ENCODE measurements at regions of chr12 and their contacts with region 1.

Region 1: GRCh38 chr12:89709157-89709994 is 738 bp upstream of the ATP2B1 start:
- DNase-seq: peak; percentile 97
- H3K4me3 Mint-ChIP-seq: peak overlapping the region; percentile 81
- H3K27ac Mint-ChIP-seq: peak overlapping the region; percentile 91
- H3K4me1 Mint-ChIP-seq: peaks cover 26% of the 10 kb centered on the region
- H3K27me3 Mint-ChIP-seq: peaks cover 31% of the 10 kb centered on the region

Region 2: GRCh38 chr12:89040146-89040964 is 669.0 kb before region 1 on chr12:
- intact Hi-C with region 1: loop called (anchors 5 kb)
- DNase-seq: peak; percentile 79
- H3K4me3 Mint-ChIP-seq: peak overlapping the region; percentile 61
- H3K27ac Mint-ChIP-seq: peak overlapping the region; percentile 95
- H3K4me1 Mint-ChIP-seq: peaks cover 65% of the 10 kb centered on the region
- H3K27me3 Mint-ChIP-seq: no peaks in the 10 kb centered on the region

Region 3: GRCh38 chr12:89524541-89525285 is 184.7 kb before region 1 on chr12 and contains the start of gene GALNT4:
- intact Hi-C with region 1: loop called (anchors 1 kb)
- DNase-seq: peak; percentile 74
- H3K4me3 Mint-ChIP-seq: peak within 1 kb of the TSS; percentile 92
- H3K27ac Mint-ChIP-seq: peak within 1 kb of the TSS; percentile 94
- H3K4me1 Mint-ChIP-seq: peaks cover 45% of the 10 kb centered on the region
- H3K27me3 Mint-ChIP-seq: no peaks in the 10 kb centered on the region
- total RNA-seq, gene GALNT4: 8.7 TPM in 2 replicates

Region 4: GRCh38 chr12:89733579-89734201 is 24.3 kb after region 1 on chr12:
- intact Hi-C with region 1: loop called (anchors 2 kb)
- DNase-seq: no peak
- H3K4me3 Mint-ChIP-seq: no peak overlapping the region
- H3K27ac Mint-ChIP-seq: no peak overlapping the region
- H3K4me1 Mint-ChIP-seq: peaks cover 5% of the 10 kb centered on the region
- H3K27me3 Mint-ChIP-seq: peaks cover 8% of the 10 kb centered on the region

Region 5: GRCh38 chr12:89840162-89840922 is 131.0 kb after region 1 on chr12:
- intact Hi-C with region 1: no loop called
- DNase-seq: no peak
- H3K4me3 Mint-ChIP-seq: no peak overlapping the region
- H3K27ac Mint-ChIP-seq: no peak overlapping the region
- H3K4me1 Mint-ChIP-seq: no peaks in the 10 kb centered on the region
- H3K27me3 Mint-ChIP-seq: peaks cover 2% of the 10 kb centered on the region

Region 6: GRCh38 chr12:89882050-89882449 is 172.7 kb after region 1 on chr12:
- intact Hi-C with region 1: loop called (anchors 1 kb)
- DNase-seq: no peak
- H3K4me3 Mint-ChIP-seq: no peak overlapping the region
- H3K27ac Mint-ChIP-seq: no peak overlapping the region
- H3K4me1 Mint-ChIP-seq: peaks cover 23% of the 10 kb centered on the region
- H3K27me3 Mint-ChIP-seq: peaks cover 2% of the 10 kb centered on the region

Region 7: DNA sequence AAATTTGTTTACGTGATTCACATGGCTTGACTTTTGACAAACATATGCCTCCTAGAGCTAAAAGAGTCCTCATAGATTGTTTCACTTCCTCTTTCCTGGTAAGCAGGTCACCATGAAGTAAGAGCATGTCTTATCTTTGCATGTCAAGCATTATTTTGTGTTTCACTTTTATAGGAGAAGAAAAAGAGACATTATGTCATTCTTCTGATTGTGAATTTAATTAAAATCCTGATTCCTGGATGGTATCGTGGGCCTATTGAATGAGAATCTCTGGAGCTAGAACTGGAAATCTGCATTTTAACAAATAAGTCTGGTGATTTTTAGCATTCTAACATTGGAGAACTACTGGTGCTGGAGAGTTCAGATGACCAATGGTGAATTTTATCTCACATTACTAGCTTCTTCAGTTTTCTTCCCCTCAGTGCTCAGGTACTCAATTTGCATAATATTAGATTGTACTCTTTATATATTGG is 217.9 kb after region 1 on chr12:
- intact Hi-C with region 1: no loop called
- DNase-seq: no peak
- H3K4me3 Mint-ChIP-seq: no peak overlapping the region
- H3K27ac Mint-ChIP-seq: no peak overlapping the region
- H3K4me1 Mint-ChIP-seq: peaks cover 7% of the 10 kb centered on the region
- H3K27me3 Mint-ChIP-seq: no peaks in the 10 kb centered on the region

Region 8: DNA sequence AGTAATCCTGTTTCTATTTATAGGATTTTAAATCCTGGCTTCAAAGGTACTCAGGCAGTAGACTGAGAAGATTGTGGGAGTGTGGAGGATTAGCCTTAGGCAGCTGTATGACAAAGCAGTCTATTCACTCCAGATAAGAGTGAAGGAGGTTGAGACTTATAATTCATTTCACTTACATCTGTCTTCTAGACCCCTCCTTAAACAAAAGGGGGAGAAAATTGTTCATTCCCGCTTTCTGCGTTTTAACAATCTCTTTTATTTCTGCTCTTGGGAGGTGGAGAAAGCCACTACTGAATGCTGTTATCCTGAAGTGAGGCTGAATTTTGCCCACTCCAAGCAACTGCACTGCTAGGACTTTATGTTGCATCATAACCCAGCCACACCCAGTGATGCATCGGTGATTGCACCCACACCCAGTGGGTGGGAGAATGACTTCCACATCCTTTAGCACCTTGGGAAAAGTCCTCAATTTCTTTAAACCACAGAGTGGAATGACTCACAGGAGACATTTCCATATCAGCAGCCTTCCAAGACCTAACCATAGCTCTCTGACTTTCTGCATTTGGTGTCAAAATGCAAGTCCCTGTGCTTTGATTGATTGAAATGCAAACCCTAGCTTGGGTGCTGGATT is 381.8 kb after region 1 on chr12:
- intact Hi-C with region 1: loop called (anchors 1 kb)
- DNase-seq: no peak
- H3K4me3 Mint-ChIP-seq: no peak overlapping the region
- H3K27ac Mint-ChIP-seq: no peak overlapping the region
- H3K4me1 Mint-ChIP-seq: peaks cover 16% of the 10 kb centered on the region
- H3K27me3 Mint-ChIP-seq: no peaks in the 10 kb centered on the region